Tibial artery (tissue), 4 donors: ENCODE measurements at regions of chr16 and their contacts with region 1.

Region 1: GRCh38 chr16:18969050-18969854 is 14.5 kb upstream of the TMC7 start:
- DNase-seq: peak; percentile 88 to 92
- H3K4me3 ChIP-seq: peak overlapping the region; percentile 30 to 43
- H3K27ac ChIP-seq: no peak overlapping the region
- H3K4me1 ChIP-seq: peaks cover 0 to 3% (median 0%) of the 10 kb centered on the region in 4 donors
- H3K27me3 ChIP-seq: no peaks in the 10 kb centered on the region
- CTCF ChIP-seq: peak; percentile 87 to 94

Region 2: DNA sequence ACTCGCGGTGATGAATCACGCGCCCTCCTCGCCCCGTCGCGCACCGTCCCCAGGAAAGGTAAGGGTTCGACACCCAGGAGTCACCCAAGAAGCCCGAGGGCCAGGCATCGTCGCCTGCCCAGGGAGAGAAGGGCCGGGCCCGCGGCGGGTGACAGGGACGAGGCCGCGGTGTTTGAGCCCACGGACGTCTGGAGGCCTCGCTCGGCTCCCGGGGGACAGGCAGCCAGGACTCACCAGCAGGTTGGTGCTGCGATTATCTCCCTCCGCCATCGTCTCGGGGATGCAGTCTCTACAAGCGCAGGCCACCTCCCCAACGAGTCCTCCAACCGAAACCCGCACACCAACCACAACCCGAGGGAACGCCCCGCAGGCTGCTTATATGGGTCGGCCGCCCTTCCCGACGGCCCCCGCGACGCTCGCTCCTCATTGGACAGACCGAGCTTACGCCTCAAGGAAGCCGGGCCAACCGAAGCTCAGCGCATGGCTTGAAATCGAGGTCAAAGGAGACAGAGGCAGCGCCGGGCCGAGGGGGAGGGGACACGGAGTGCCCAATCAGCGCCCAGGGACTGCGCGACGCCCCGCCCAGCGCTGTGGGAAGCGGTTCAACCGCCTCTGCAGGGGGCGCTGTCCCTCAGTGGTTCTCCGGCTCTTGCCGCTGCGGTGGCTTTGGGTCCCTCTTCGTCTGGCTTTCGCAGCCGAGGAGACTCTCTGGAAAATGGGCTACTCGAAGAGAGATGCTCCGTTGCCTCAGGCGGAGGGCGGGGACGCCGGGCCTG is 167.9 kb before region 1 on chr16 and contains the start of gene ARL6IP1:
- intact Hi-C with region 1: loop called (anchors 5 kb)
- DNase-seq: peak; percentile 99 to 100
- H3K4me3 ChIP-seq: peak within 1 kb of the TSS; percentile 58 to 83
- H3K27ac ChIP-seq: peak within 1 kb of the TSS; percentile 86 to 91
- H3K4me1 ChIP-seq: peaks cover 0 to 30% (median 17%) of the 10 kb centered on the region in 4 donors
- H3K27me3 ChIP-seq: no peaks in the 10 kb centered on the region
- CTCF ChIP-seq: peak; percentile 92

Region 3: GRCh38 chr16:18936727-18937340 is 32.4 kb before region 1 on chr16:
- intact Hi-C with region 1: no loop called
- DNase-seq: no peak
- H3K4me3 ChIP-seq: no peak overlapping the region
- H3K27ac ChIP-seq: no peak overlapping the region
- H3K4me1 ChIP-seq: peaks cover 0 to 18% (median 10%) of the 10 kb centered on the region in 4 donors
- H3K27me3 ChIP-seq: no peaks in the 10 kb centered on the region
- CTCF ChIP-seq: no peak